CD8-positive, alpha-beta T cell (primary cell): ENCODE measurements at regions of chr9 and their contacts with region 1.

Region 1: GRCh38 chr9:25742256-25742655 is 64.0 kb upstream of the TUSC1 start:
- DNase-seq: no peak
- ATAC-seq: no peak
- H3K4me3 ChIP-seq: no peak overlapping the region
- H3K4me3 Mint-ChIP-seq: no peak overlapping the region
- H3K27ac ChIP-seq: no peak overlapping the region
- H3K27ac Mint-ChIP-seq: no peak overlapping the region
- H3K4me1 ChIP-seq: no peaks in the 10 kb centered on the region
- H3K4me1 Mint-ChIP-seq: no peaks in the 10 kb centered on the region
- H3K27me3 ChIP-seq: no peaks in the 10 kb centered on the region
- H3K27me3 Mint-ChIP-seq: no peaks in the 10 kb centered on the region
- CTCF ChIP-seq: no peak

Region 2: GRCh38 chr9:25658571-25658970 is 83.7 kb before region 1 on chr9:
- CTCF ChIA-PET with region 1: no interaction called
- POLR2A ChIA-PET with region 1: no interaction called
- intact Hi-C with region 1: no loop called
- DNase-seq: no peak
- ATAC-seq: no peak
- H3K4me3 ChIP-seq: no peak overlapping the region
- H3K4me3 Mint-ChIP-seq: no peak overlapping the region
- H3K27ac ChIP-seq: no peak overlapping the region
- H3K27ac Mint-ChIP-seq: no peak overlapping the region
- H3K4me1 ChIP-seq: no peaks in the 10 kb centered on the region
- H3K4me1 Mint-ChIP-seq: no peaks in the 10 kb centered on the region
- H3K27me3 ChIP-seq: no peaks in the 10 kb centered on the region
- H3K27me3 Mint-ChIP-seq: no peaks in the 10 kb centered on the region
- CTCF ChIP-seq: no peak

Region 3: DNA sequence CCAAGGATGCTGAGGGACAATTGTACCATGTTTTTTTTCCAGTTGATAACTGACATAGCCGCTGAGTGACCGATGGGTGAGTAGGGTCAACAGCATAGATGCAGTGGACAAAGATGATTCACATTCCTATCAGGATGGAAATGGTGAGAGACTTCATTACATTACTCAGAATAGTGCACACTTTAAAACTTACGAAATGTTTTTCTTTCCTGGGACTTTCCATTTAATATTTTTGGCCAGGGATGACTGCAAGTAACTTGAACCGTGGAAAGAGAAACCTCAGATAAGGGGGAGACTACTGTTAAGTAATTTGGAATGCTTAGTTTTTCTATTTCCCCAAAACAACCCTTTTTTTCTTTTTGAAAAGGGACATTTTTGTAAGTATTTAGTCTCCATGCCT is 61.0 kb before region 1 on chr9:
- CTCF ChIA-PET with region 1: no interaction called
- POLR2A ChIA-PET with region 1: no interaction called
- intact Hi-C with region 1: loop called in 1 of 2 experiments (anchors 10 kb)
- DNase-seq: no peak
- ATAC-seq: no peak
- H3K4me3 ChIP-seq: no peak overlapping the region
- H3K4me3 Mint-ChIP-seq: no peak overlapping the region
- H3K27ac ChIP-seq: no peak overlapping the region
- H3K27ac Mint-ChIP-seq: no peak overlapping the region
- H3K4me1 ChIP-seq: no peaks in the 10 kb centered on the region
- H3K4me1 Mint-ChIP-seq: peaks cover 2% of the 10 kb centered on the region
- H3K27me3 ChIP-seq: no peaks in the 10 kb centered on the region
- H3K27me3 Mint-ChIP-seq: peaks cover 10% of the 10 kb centered on the region
- CTCF ChIP-seq: no peak